Activated CD4-positive, alpha-beta T cell treated with anti-CD3 and anti-CD28 coated beads, Interleukin-2, amount 10 ng/mL, durations not matched to agents 24 days and 14 days (primary cell): ENCODE measurements at regions of chr10 and their contacts with region 1.

Region 1: GRCh38 chr10:122435212-122435827 is 19.1 kb upstream of the ARMS2 start:
- DNase-seq: peak; percentile 64
- H3K4me3 Mint-ChIP-seq: no peak overlapping the region
- H3K27ac Mint-ChIP-seq: no peak overlapping the region
- H3K4me1 Mint-ChIP-seq: no peaks in the 10 kb centered on the region
- H3K27me3 Mint-ChIP-seq: peaks cover 1% of the 10 kb centered on the region

Region 2: DNA sequence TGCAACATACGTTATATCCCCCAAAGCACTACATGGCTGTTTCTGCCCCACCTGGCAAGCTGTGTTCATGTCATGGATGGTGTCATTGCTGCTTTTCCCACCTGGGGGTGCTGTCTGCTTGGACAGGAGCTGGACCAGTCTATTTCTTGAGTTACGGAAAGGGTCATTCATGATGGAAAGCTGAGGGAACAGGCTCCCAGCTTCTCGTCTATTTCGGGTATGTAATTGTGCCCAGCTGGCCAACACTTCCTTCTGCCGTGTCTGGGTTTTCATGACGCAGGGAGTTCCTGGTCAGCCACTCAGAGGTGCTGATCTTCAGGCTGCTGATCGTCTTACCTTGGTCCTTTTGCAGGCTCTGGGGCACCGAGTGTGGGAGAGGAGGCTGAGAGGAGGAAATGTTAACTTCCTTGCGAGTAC is 155.6 kb before region 1 on chr10:
- intact Hi-C with region 1: no loop called
- DNase-seq: peak; percentile 62
- H3K4me3 Mint-ChIP-seq: no peak overlapping the region
- H3K27ac Mint-ChIP-seq: no peak overlapping the region
- H3K4me1 Mint-ChIP-seq: no peaks in the 10 kb centered on the region
- H3K27me3 Mint-ChIP-seq: peaks cover 7% of the 10 kb centered on the region

Region 3: DNA sequence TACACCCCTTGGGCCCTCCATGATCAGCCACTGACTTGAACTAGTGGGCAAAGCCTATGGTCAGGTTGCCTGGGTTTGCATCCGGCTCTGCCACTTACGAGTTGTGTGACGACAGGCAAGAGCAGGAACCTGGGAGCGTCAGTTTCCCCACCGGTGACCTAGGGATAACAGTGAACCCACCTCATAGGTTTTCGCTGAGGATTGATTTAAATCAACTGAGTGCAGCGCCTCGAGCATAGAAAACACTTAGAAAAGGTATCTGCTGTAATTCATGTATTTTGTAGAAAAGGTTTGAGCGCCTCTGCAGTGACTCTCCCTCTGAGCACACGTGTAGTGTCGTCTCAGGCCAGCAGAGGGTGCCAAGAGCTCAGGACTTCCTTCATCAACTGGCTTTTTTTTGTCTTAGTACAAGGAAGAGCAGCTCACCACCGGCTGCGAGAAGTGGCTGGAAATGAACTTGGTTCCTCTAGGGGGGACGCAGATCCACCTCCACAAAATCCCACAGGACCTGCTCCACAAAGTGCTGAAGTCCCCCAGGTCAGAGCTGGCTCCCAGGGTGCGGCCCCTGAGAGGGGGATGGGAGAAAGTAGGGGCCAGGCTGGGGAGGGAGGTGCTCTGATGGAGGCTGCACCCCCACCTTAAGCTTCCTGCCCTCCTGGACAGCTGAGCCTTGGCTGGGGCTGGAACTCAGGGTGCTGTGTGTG is 136.6 kb before region 1 on chr10:
- intact Hi-C with region 1: loop called (anchors 1 kb)
- DNase-seq: peak; percentile 87
- H3K4me3 Mint-ChIP-seq: no peak overlapping the region
- H3K27ac Mint-ChIP-seq: peak overlapping the region; percentile 18
- H3K4me1 Mint-ChIP-seq: peaks cover 8% of the 10 kb centered on the region
- H3K27me3 Mint-ChIP-seq: peaks cover 4% of the 10 kb centered on the region

Region 4: GRCh38 chr10:122342293-122343134 is 92.8 kb before region 1 on chr10:
- intact Hi-C with region 1: loop called (anchors 1 kb)
- DNase-seq: peak; percentile 83
- H3K4me3 Mint-ChIP-seq: no peak overlapping the region
- H3K27ac Mint-ChIP-seq: no peak overlapping the region
- H3K4me1 Mint-ChIP-seq: no peaks in the 10 kb centered on the region
- H3K27me3 Mint-ChIP-seq: peaks cover 5% of the 10 kb centered on the region

Region 5: DNA sequence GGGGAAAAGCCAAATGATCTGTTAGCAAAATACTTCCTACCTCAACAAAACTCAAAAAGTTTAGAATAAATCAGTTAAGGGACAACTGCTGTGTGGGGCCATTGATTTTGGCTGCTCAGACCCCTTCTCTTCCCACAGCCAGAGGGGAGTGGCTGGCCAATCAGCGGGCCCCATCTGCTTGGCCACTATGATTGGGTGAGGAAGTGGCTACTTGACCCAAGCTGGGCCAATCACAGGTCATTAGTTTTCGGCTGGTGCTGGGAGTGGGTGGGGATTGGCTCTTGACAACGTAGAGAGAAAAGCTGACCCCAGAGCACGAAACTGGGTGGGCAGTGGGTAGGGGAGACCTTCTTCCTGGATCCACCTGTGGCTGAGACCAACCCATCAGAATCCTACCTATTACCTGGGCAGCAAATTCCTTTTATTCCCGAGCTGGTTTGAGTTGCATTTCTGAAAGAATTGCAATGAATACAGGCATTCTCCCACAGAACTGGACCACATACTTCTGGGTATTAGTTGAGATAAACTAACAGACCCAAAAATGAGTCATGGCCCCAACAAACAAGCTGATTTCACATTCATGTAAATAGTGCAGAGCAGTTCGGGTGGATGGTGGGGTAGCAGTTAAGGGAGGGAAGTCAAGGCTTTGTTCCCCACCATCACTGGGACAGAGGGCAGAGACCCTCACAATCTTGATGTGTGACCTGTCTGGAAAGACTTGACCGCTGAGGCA is 664.9 kb after region 1 on chr10:
- intact Hi-C with region 1: no loop called
- DNase-seq: no peak
- H3K4me3 Mint-ChIP-seq: no peak overlapping the region
- H3K27ac Mint-ChIP-seq: no peak overlapping the region
- H3K4me1 Mint-ChIP-seq: no peaks in the 10 kb centered on the region
- H3K27me3 Mint-ChIP-seq: no peaks in the 10 kb centered on the region